Upper lobe of right lung (tissue), 1 donor: ENCODE measurements at regions of chr4 and their contacts with region 1.

Region 1: DNA sequence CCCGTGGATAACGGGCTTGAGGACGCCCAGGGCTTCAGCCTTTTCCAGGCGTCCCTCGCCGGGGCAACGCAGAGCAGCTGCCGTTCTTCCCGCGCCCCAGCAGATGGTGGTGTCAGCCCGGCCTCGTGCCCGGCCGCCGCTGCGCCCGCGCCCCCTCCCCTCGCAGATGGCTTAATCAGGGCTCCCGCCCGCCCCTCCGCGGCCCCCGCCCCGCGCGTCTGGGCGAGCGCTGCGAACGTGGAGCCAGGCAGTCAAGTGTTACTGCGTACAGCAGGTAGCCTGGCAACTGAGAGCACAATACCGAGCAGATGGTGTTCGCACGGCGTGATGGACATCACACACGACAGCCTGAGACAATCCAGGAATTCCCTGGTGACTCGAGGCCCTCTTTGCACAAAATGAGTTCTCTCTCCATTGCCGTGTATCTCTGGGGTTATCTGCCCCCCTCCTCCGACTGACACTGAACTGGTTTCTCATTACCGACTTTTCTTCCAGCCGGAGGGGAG is 69.3 kb downstream of the MGST2 start:
- DNase-seq: peak; percentile 94
- ATAC-seq: peak; percentile 98
- H3K4me3 ChIP-seq: peak overlapping the region; percentile 52
- H3K27ac ChIP-seq: peak overlapping the region; percentile 88
- H3K4me1 ChIP-seq: peaks cover 33% of the 10 kb centered on the region
- H3K27me3 ChIP-seq: no peaks in the 10 kb centered on the region
- CTCF ChIP-seq: peak; percentile 86

Region 2: GRCh38 chr4:140116442-140117104 is 381.6 kb after region 1 on chr4:
- intact Hi-C with region 1: no loop called
- DNase-seq: no peak
- ATAC-seq: peak; percentile 47
- H3K4me3 ChIP-seq: no peak overlapping the region
- H3K27ac ChIP-seq: no peak overlapping the region
- H3K4me1 ChIP-seq: no peaks in the 10 kb centered on the region
- H3K27me3 ChIP-seq: no peaks in the 10 kb centered on the region
- CTCF ChIP-seq: no peak

Region 3: GRCh38 chr4:140153718-140154571 is 419.0 kb after region 1 on chr4 and contains the start of gene MAML3:
- intact Hi-C with region 1: loop called (anchors 10 kb)
- DNase-seq: peak; percentile 97
- ATAC-seq: peak; percentile 77
- H3K4me3 ChIP-seq: peak within 1 kb of the TSS; percentile 81
- H3K27ac ChIP-seq: peak within 1 kb of the TSS; percentile 97
- H3K4me1 ChIP-seq: peaks cover 17% of the 10 kb centered on the region
- H3K27me3 ChIP-seq: no peaks in the 10 kb centered on the region
- CTCF ChIP-seq: no peak
- total RNA-seq, gene MAML3: 13.1 TPM